HEK293T (cell line): ENCODE measurements at regions of chr15 and their contacts with region 1.

Region 1: DNA sequence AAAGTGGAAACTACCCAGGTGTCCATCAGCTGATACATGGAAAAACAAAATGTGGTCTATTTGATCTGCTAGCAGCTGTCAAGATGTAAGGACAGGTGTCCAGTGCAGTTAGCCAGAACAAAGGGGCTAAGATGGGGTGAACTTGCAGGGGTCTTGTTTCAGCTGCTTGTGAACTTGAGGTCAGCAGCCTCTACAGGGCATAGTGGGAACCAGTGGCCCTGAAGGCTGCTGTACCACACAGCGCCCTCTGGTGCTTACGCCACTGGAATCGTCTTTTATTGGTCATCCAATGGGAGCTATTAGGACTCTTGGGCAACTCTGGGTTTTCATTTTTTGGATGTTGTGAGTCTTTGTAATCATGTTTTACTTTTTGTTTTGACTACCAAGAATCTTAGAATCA is 62.2 kb upstream of the CTSH start:
- DNase-seq: peak; percentile 47

Region 2: GRCh38 chr15:78921517-78921916 is 85.5 kb before region 1 on chr15:
- CTCF ChIA-PET with region 1: interaction called, 11 read pairs
- POLR2A ChIA-PET with region 1: no interaction called
- DNase-seq: no peak

Region 3: DNA sequence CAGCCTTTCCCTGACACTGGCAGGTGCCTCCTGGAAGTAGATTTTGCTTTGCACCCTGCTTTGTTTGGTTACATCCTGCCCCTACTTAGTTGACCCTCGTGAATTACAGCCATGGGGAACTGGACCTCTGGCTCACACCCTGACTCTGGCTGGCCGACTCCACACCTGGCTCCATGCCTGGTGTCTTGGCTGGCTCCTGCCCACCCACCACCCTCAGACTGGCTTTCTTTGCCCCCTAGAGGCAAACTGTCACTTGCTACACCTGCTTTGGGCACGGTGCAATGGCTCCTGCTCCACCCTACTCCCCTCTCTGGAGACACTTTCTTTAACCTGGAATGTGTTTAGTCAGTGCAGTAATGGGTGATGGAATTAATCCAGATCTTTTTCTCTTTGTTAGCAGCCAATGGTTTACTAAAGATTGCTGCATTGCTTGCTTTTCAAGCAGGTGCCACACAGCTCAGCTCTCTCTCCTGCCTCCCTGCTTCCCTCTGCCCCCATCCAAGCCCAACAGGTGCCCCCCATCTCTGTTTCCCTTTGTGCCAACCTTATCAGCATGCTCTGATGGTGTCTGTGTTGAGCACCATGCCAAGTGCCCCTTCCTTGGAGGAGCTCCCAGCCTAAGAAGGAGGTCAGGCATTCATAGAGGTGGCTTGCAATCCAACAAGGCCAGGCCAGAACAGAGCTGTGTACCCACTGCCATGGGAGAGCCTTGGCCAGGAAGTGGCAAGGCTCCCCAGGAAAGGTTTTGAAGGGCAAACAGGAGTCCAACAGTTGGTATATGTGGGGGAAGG is 45.1 kb after region 1 on chr15:
- CTCF ChIA-PET with region 1: no interaction called
- POLR2A ChIA-PET with region 1: no interaction called
- DNase-seq: no peak